HEK293 (cell line): ENCODE measurements at regions of chr5 and their contacts with region 1.

Region 1: GRCh38 chr5:91383027-91383955 is at the start of gene ARRDC3:
- H3K4me3 ChIP-seq: peak within 1 kb of the TSS; percentile 72
- H3K27ac ChIP-seq: peak within 1 kb of the TSS; percentile 71
- H3K4me1 ChIP-seq: peaks cover 6% of the 10 kb centered on the region; the same call in 1 of the 2 replicates
- CTCF ChIP-seq: peak; percentile 38; the same call in 1 of the 2 replicates

Region 2: GRCh38 chr5:90932052-90932699 is 451.1 kb before region 1 on chr5:
- CTCF ChIA-PET with region 1: interaction called, 57 read pairs
- POLR2A ChIA-PET with region 1: interaction called, 3 read pairs
- H3K4me3 ChIP-seq: no peak overlapping the region
- H3K27ac ChIP-seq: no peak overlapping the region
- H3K4me1 ChIP-seq: peaks cover 5% of the 10 kb centered on the region; the same call in 1 of the 2 replicates
- CTCF ChIP-seq: peak; percentile 72; the same call in 1 of the 2 replicates

Region 3: DNA sequence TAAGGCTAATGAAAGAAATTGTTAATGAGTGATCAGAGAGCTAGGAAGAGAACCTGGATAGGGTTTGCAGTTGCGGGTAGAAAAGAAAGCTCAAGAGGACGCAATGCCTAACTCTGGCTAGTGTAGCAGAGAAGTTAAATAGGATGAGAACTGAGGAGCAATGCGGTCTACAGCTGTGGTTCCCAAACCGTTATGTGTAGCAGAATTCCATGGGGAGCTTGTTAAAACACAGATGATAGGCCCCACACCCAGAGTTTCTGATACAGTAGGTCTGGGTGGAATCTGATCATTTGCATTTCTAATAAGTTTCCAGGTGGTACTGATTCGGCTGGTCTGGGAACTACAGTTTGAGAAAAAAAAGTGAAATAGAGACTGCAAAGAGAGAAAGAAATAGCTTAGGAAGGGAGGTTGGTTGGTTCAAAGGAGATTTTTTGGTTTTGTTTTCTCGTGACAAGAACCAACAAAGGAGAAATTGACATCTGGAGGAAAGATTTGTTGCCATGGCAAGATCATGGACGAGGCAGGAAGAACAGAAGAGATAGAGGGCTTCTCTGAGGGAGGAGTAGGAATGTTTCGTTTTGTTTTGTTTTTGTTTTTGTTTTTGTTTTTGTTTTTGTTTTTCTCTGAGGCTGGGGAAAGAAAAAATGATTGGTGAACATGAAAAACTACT is 276.3 kb before region 1 on chr5:
- CTCF ChIA-PET with region 1: interaction called, 71 read pairs
- POLR2A ChIA-PET with region 1: interaction called, 4 read pairs
- H3K4me3 ChIP-seq: no peak overlapping the region
- H3K27ac ChIP-seq: no peak overlapping the region
- H3K4me1 ChIP-seq: no peaks in the 10 kb centered on the region
- CTCF ChIP-seq: no peak

Region 4: DNA sequence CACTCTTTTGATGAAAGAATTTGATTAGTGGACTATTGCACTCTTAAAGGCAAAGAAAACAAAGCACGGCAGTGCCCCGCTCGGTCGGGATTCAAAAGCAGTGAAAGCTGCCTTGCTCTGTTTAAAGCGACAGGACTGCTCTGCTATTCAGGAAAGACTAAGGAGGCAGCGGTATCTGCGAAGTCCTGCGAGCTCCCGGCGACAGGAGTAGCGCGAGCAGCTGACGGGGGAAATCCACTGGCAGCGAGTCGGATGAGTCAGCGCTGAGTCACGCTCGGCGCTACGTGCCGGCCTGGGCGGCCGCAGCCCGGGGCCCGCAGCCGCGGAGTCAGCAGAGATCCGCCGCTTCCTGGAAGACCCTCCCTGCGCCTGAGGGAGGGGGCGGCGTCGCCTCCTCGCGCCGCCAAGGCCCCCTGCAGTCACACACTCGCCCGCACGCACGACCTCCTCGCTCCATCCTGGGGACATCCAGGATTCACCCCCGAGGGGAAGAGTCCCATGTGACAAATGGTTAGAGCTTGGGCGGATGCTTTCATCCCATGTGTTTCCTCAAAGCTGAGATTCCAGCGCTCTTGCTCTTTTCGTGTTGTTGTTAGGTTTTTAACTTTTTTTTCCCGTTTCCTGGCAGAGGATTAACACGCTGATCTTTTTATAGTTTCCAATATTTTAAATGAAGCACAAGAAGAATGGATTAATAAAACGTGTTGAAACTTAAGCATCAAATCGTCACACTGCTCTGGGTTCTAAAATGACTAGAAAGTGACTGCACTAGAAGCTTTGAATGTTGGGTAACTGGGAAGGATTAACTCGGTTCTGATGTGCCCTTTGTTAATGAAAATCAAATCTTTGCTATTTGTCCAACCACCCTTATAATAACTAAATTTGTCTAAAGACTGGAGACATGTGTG is 102.7 kb before region 1 on chr5:
- CTCF ChIA-PET with region 1: interaction called, 9 read pairs
- POLR2A ChIA-PET with region 1: interaction called, 13 read pairs
- H3K4me3 ChIP-seq: peak overlapping the region; percentile 46
- H3K27ac ChIP-seq: peak overlapping the region; percentile 21
- H3K4me1 ChIP-seq: no peaks in the 10 kb centered on the region
- CTCF ChIP-seq: no peak; the same call in 1 of the 2 replicates

Region 5: DNA sequence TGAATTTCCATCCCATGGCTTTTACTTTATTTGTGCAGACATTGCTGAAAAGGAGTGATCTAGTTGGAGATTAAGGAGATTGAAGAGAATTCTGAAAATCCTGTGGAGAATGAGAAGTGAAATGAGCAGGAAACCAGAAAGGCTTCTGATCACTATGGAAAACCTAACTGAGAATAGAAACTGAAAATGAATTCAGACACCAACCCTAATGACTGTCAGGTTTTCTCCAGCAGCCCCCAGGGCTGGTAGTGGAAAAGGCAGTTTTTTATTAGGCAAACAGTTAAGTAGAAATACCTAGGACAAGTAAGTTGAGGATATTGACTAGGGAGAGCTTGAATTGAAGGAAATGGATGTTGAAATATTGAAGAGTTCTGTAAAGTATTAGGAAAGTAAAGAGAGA is 14.5 kb after region 1 on chr5:
- CTCF ChIA-PET with region 1: interaction called, 25 read pairs
- POLR2A ChIA-PET with region 1: interaction called, 3 read pairs
- H3K4me3 ChIP-seq: no peak overlapping the region
- H3K27ac ChIP-seq: no peak overlapping the region
- H3K4me1 ChIP-seq: no peaks in the 10 kb centered on the region
- CTCF ChIP-seq: no peak

Region 6: GRCh38 chr5:91449083-91449482 is 65.8 kb after region 1 on chr5:
- CTCF ChIA-PET with region 1: no interaction called
- POLR2A ChIA-PET with region 1: no interaction called
- H3K4me3 ChIP-seq: no peak overlapping the region
- H3K27ac ChIP-seq: no peak overlapping the region
- H3K4me1 ChIP-seq: no peaks in the 10 kb centered on the region
- CTCF ChIP-seq: no peak